Breast epithelium (tissue), 4 donors: ENCODE measurements at regions of chr2 and their contacts with region 1.

Region 1: GRCh38 chr2:179487010-179487731 is 222.5 kb upstream of the SESTD1 start:
- DNase-seq: no peak
- H3K4me3 ChIP-seq: no peak overlapping the region
- H3K27ac ChIP-seq: no peak overlapping the region
- H3K4me1 ChIP-seq: no peaks in the 10 kb centered on the region
- H3K27me3 ChIP-seq: no peaks in the 10 kb centered on the region
- CTCF ChIP-seq: no peak
- POLR2A ChIP-seq: no peak

Region 2: GRCh38 chr2:177842243-177842642 is 1644.9 kb before region 1 on chr2:
- intact Hi-C with region 1: no loop called
- DNase-seq: no peak
- H3K4me3 ChIP-seq: no peak overlapping the region
- H3K27ac ChIP-seq: no peak overlapping the region
- H3K4me1 ChIP-seq: no peaks in the 10 kb centered on the region
- H3K27me3 ChIP-seq: no peaks in the 10 kb centered on the region
- CTCF ChIP-seq: no peak
- POLR2A ChIP-seq: no peak

Region 3: DNA sequence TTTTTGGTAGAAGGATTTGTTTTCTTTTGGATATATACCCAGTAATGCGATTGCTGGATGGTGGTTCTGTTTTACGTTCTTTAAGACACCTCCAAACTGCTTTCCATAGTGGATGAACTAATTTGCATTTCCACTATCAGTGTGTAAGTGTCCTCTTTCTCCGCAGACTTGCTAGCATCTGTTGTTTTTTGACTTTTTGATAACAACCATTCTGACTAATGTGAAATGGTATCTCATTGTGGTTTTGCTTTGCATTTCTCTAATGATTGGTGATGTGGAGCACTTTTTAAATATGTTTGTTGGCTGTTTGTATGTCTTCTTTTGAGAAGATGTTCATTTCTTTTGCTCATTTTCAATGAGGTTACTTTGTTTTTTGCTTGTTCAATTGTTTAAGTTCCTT is 780.8 kb after region 1 on chr2:
- intact Hi-C with region 1: loop called (anchors 5 kb)
- DNase-seq: no peak
- H3K4me3 ChIP-seq: no peak overlapping the region
- H3K27ac ChIP-seq: no peak overlapping the region
- H3K4me1 ChIP-seq: no peaks in the 10 kb centered on the region
- H3K27me3 ChIP-seq: no peaks in the 10 kb centered on the region
- CTCF ChIP-seq: no peak
- POLR2A ChIP-seq: no peak